ENCODE measurements at regions of chr4 and their contacts with region 1.

Region 1: GRCh38 chr4:15001869-15002658 is at the start of gene CPEB2:
- DNase-seq: peak; percentile 92 to 98 (median 96)

Region 2: GRCh38 chr4:15162465-15163283 is 160.6 kb after region 1 on chr4:
- intact Hi-C with region 1: loop called (anchors 5 kb)
- DNase-seq: peak in 4 of 42 donors; percentile 11 to 28 (median 17)

Measured in head of caudate nucleus (tissue), 42 donors.